Tibial artery (tissue), 4 donors: ENCODE measurements at regions of chr2 and their contacts with region 1.

Region 1: DNA sequence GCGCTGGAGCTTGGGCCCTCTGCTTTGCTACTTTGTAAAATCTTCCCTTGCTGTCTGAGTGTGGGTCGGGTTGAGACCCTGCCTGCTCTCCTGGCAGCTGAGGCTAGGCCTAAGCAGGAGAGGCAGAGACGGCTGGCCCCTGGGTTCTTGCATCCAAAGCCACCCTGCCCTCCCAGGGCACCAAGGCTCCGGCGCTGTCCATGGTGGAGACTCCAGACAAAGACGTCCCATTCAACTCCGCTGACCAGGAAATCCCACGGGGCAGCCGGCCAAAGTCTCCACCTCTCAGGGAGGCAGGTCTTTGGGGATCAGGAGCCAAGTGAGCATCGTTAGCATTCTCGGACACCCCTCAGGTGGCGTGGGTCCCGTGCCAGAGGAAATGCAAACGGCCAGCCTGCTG is 2.6 kb upstream of the PRLH start:
- DNase-seq: no peak
- H3K4me3 ChIP-seq: no peak overlapping the region
- H3K27ac ChIP-seq: no peak overlapping the region
- H3K4me1 ChIP-seq: no peaks in the 10 kb centered on the region
- H3K27me3 ChIP-seq: peaks cover 0 to 22% of the 10 kb centered on the region in 2 donors
- CTCF ChIP-seq: no peak

Region 2: GRCh38 chr2:237514474-237515130 is 49.2 kb before region 1 on chr2:
- intact Hi-C with region 1: loop called (anchors 2 kb)
- DNase-seq: no peak
- H3K4me3 ChIP-seq: no peak overlapping the region
- H3K27ac ChIP-seq: no peak overlapping the region
- H3K4me1 ChIP-seq: peaks cover 0 to 10% (median 0%) of the 10 kb centered on the region in 4 donors
- H3K27me3 ChIP-seq: peaks cover 0 to 7% of the 10 kb centered on the region in 2 donors
- CTCF ChIP-seq: no peak

Region 3: GRCh38 chr2:237529452-237530402 is 34.1 kb before region 1 on chr2:
- intact Hi-C with region 1: loop called (anchors 5 kb)
- DNase-seq: no peak
- H3K4me3 ChIP-seq: no peak overlapping the region
- H3K27ac ChIP-seq: no peak overlapping the region
- H3K4me1 ChIP-seq: no peaks in the 10 kb centered on the region
- H3K27me3 ChIP-seq: peaks cover 0 to 3% of the 10 kb centered on the region in 2 donors
- CTCF ChIP-seq: no peak